ENCODE measurements at regions of chr10 and their contacts with region 1.

Region 1: DNA sequence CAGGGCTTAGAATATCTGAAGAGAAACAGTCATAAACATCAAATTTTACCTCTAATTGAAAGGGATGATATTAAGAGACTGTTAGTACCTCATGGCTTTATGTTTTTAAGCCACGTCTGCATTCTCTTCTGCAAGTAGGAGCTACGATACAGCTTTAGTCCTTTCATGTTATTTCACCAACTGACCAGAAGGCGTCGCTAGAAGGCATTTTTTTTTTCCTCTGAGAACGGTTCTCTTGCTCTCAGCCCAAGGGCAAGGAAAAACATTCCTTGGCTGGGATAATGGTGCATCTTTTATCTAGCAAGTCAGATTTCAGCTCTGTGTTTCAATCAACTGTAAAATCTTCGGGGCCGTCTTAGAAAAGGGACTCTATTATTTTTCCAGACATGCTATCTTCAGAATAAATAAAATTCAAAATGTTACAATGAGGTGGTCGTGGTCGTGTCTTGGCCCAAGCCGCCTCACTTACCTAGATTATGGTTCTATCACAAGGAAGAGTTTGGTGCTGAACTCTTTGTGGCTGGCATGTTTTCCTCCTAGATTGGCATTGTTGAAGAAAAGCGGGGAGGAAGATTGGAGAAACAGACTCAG is 41.6 kb upstream of the LYZL2 start:
- DNase-seq: peak; percentile 82
- H3K4me3 ChIP-seq: peak overlapping the region; percentile 26
- H3K27ac ChIP-seq: no peak overlapping the region
- H3K4me1 ChIP-seq: no peaks in the 10 kb centered on the region
- H3K27me3 ChIP-seq: no peaks in the 10 kb centered on the region
- CTCF ChIP-seq: peak; percentile 72

Region 2: DNA sequence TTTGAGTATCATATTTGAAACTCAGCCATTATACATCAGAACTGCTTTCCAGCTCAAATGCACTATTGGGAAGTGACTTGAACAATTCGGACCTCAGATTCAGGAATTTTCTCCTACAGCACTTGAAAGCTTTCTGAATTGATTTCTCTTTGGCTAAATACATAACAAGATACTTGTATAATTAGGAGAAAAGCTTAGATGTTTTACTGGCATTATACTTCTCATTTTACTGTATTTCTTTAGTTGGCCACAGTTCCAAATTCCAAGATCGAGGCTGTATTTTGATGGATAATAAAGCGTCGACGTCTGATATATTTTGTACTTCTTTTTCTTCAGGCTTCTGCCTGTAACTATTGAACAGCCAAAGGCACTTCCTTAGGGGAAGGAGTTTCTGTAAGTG is 14.9 kb before region 1 on chr10:
- CTCF ChIA-PET with region 1: no interaction called
- POLR2A ChIA-PET with region 1: no interaction called
- intact Hi-C with region 1: no loop called
- DNase-seq: no peak
- H3K4me3 ChIP-seq: no peak overlapping the region
- H3K27ac ChIP-seq: no peak overlapping the region
- H3K4me1 ChIP-seq: no peaks in the 10 kb centered on the region
- H3K27me3 ChIP-seq: peaks cover 22% of the 10 kb centered on the region
- CTCF ChIP-seq: no peak

Region 3: GRCh38 chr10:30687698-30688219 is 16.6 kb after region 1 on chr10:
- CTCF ChIA-PET with region 1: interaction called, 11 read pairs
- POLR2A ChIA-PET with region 1: no interaction called
- intact Hi-C with region 1: no loop called
- DNase-seq: peak; percentile 83
- H3K4me3 ChIP-seq: no peak overlapping the region
- H3K27ac ChIP-seq: no peak overlapping the region
- H3K4me1 ChIP-seq: no peaks in the 10 kb centered on the region
- H3K27me3 ChIP-seq: peaks cover 5% of the 10 kb centered on the region
- CTCF ChIP-seq: peak; percentile 97